Naive thymus-derived CD4-positive, alpha-beta T cell (primary cell): ENCODE measurements at regions of chr20 and their contacts with region 1.

Region 1: GRCh38 chr20:3767427-3768341 is at the start of gene ADISSP:
- DNase-seq: peak; percentile 92 to 98 (median 94)
- ATAC-seq: peak; percentile 93
- H3K4me3 ChIP-seq: peak within 1 kb of the TSS; percentile 96
- H3K4me3 Mint-ChIP-seq: peak within 1 kb of the TSS; percentile 78 to 94 (median 90)
- H3K27ac ChIP-seq: peak within 1 kb of the TSS; percentile 100
- H3K27ac Mint-ChIP-seq: peak within 1 kb of the TSS; percentile 89 to 98 (median 94)
- H3K4me1 ChIP-seq: peaks cover 6 to 13% of the 10 kb centered on the region in 2 donors
- H3K4me1 Mint-ChIP-seq: peaks cover 11 to 29% (median 21%) of the 10 kb centered on the region in 7 donors
- H3K27me3 ChIP-seq: no peaks in the 10 kb centered on the region
- H3K27me3 Mint-ChIP-seq: peaks cover 0 to 6% (median 0%) of the 10 kb centered on the region in 5 donors
- total RNA-seq, gene ADISSP: 14.0 to 27.4 (median 18.4) TPM

Region 2: DNA sequence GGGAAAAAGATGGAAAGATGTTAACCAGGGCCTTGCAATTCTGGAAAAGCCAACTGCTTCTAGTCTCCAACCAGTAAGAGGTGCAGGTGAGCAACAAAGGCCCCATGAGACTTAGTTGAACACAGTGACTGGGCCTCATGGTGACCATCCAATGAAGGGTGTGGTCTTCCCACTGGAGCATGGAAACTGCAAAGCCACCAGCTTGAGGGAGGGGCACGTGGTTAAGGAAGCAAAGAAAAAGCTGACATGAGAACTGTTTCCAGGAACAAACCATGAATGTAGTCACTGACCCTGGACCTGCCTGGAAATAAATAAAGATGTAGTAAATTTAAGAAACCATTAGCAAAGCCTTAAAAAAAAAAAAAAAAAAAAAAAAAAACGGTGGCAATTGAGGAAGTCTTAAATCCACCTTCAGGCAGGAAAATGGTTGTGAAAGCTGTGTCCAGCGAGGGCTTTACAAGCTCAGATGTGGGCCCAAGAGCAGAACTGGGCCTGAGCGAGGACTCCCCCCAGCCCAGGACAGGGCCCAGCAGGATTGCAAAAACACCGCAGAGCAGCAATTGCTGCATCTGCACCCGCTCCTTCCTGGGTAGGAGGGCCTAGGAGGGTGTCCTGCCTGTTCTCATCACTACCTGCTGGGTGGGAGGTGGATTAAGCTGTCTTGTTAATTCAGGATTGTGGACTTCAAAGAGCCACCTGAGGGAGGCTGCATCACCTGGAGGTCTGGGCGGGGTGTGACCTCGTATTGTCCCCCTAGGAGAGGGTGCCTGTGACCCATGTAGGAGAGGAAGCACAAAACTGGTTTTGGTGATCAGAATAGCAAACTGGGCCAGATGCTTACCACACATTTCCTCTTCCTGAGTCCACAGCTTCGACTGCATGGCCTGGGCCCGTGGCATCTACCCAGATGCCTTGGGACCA is 114.7 kb before region 1 on chr20:
- CTCF ChIA-PET with region 1: no interaction called
- POLR2A ChIA-PET with region 1: no interaction called
- intact Hi-C with region 1: no loop called
- DNase-seq: no peak
- ATAC-seq: no peak
- H3K4me3 ChIP-seq: no peak overlapping the region
- H3K4me3 Mint-ChIP-seq: no peak overlapping the region
- H3K27ac ChIP-seq: no peak overlapping the region
- H3K27ac Mint-ChIP-seq: peak overlapping the region in 2 of 9 donors; percentile 17 to 21
- H3K4me1 ChIP-seq: no peaks in the 10 kb centered on the region
- H3K4me1 Mint-ChIP-seq: peaks cover 0 to 10% (median 0%) of the 10 kb centered on the region in 7 donors
- H3K27me3 ChIP-seq: no peaks in the 10 kb centered on the region
- H3K27me3 Mint-ChIP-seq: peaks cover 0 to 8% (median 0%) of the 10 kb centered on the region in 5 donors

Region 3: GRCh38 chr20:3679749-3680700 is 87.7 kb before region 1 on chr20:
- CTCF ChIA-PET with region 1: interaction called, 4 read pairs
- POLR2A ChIA-PET with region 1: no interaction called
- intact Hi-C with region 1: loop called in 1 of 2 experiments (anchors 2 kb)
- DNase-seq: no peak
- ATAC-seq: no peak
- H3K4me3 ChIP-seq: no peak overlapping the region
- H3K4me3 Mint-ChIP-seq: no peak overlapping the region
- H3K27ac ChIP-seq: no peak overlapping the region
- H3K27ac Mint-ChIP-seq: no peak overlapping the region
- H3K4me1 ChIP-seq: no peaks in the 10 kb centered on the region
- H3K4me1 Mint-ChIP-seq: peaks cover 0 to 9% (median 4%) of the 10 kb centered on the region in 7 donors
- H3K27me3 ChIP-seq: no peaks in the 10 kb centered on the region
- H3K27me3 Mint-ChIP-seq: peaks cover 47 to 71% (median 60%) of the 10 kb centered on the region in 5 donors

Region 4: DNA sequence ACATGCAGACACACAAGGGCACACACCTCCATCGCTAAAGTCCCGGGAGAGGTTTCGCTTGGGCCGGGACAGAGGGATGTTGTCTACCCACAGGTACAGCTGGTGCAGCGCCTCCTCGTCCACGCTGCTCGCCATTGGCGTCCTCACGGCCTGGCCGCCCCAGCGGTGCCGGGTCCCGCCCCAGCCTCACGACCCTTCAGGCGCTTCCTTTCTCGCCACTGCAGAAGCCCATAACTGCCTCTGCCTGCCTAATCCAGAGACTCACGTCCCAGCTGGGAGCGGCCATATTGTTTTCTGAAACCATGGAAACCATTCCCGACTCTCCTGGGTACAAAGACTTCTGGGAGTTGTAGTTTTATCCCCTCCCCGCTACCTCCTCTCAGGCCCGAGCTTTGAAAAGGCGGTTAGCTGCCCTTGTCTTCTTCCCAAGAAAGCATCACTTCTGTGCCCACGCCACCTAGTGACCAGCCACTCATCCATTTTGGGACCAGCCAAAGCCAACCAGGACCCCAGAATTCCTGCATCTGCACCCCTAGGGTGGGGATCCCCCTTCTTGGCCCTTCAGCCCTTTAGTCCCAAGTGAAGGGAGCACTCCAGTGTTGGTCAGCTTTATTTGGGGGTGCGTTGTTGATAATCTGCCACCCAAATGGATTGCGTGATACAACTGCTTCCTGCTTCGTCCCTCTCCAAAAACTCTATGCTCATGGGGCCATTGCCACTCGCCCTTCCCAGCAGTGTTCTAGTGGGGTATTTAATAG is 13.6 kb after region 1 on chr20 and contains the start of gene SPEF1:
- CTCF ChIA-PET with region 1: interaction called, 7 read pairs
- POLR2A ChIA-PET with region 1: interaction called, 21 read pairs
- intact Hi-C with region 1: loop called (anchors 1 kb)
- DNase-seq: peak in 5 of 9 donors; percentile 38 to 56 (median 50)
- ATAC-seq: peak; percentile 67
- H3K4me3 ChIP-seq: peak within 1 kb of the TSS; percentile 24
- H3K4me3 Mint-ChIP-seq: peak within 1 kb of the TSS; percentile 1 to 81 (median 61)
- H3K27ac ChIP-seq: peak within 1 kb of the TSS; percentile 28
- H3K27ac Mint-ChIP-seq: peak within 1 kb of the TSS in 7 of 9 donors; percentile 25 to 78 (median 67)
- H3K4me1 ChIP-seq: peaks cover 4 to 10% of the 10 kb centered on the region in 2 donors
- H3K4me1 Mint-ChIP-seq: peaks cover 22 to 51% (median 44%) of the 10 kb centered on the region in 7 donors
- H3K27me3 ChIP-seq: no peaks in the 10 kb centered on the region
- H3K27me3 Mint-ChIP-seq: peaks cover 0 to 29% (median 0%) of the 10 kb centered on the region in 5 donors
- total RNA-seq, gene SPEF1: 0.24 to 0.32 (median 0.29) TPM in 3 of 5 experiments, not detected in the others

Region 5: DNA sequence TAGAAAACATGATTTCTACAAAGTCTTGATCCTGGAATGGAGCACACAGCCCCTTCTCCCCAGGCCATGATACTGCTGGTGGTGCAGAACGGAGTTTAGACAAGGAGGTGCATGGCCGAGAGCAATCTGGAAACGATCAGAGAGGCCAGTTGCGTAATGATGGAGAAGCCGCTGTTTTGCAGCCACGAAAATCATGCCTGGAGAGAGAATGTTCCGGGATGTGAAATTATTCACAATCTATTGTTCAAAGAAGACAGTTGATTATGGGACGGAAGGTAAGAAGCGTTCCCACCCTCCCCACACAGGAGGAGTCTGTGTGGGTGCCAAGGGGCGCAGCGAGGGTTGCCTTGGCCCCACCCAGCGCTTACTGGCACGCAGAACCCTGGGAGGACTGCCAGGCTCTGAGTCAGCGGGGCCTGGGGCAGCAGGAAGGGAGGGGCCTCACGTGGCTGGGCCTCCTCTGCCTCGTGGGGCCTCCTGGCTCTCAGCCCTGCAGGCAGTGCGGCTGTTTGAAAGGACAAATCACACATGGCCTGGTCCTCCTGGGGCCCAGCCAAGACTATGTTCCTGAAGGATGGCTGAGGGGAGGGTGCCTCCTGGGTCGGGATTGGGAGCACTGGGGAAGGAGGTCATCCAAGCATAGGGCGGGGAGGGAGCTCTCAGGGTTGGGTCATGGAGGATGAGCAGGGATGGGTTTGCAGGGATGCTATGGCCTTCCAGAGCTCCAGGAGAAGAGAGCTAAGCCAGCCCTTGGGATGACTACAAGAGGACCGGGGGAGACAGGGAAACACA is 44.0 kb after region 1 on chr20:
- CTCF ChIA-PET with region 1: interaction called, 3 read pairs
- POLR2A ChIA-PET with region 1: interaction called, 15 read pairs
- intact Hi-C with region 1: loop called in 1 of 2 experiments (anchors 1 kb)
- DNase-seq: peak; percentile 79 to 96 (median 91)
- ATAC-seq: peak; percentile 97
- H3K4me3 ChIP-seq: peak overlapping the region; percentile 62
- H3K4me3 Mint-ChIP-seq: peak overlapping the region; percentile 77 to 96 (median 90)
- H3K27ac ChIP-seq: peak overlapping the region; percentile 84
- H3K27ac Mint-ChIP-seq: peak overlapping the region; percentile 94 to 100 (median 98)
- H3K4me1 ChIP-seq: peaks cover 70% of the 10 kb centered on the region in 2 donors
- H3K4me1 Mint-ChIP-seq: peaks cover 56 to 80% (median 71%) of the 10 kb centered on the region in 7 donors
- H3K27me3 ChIP-seq: no peaks in the 10 kb centered on the region
- H3K27me3 Mint-ChIP-seq: no peaks in the 10 kb centered on the region

Region 6: DNA sequence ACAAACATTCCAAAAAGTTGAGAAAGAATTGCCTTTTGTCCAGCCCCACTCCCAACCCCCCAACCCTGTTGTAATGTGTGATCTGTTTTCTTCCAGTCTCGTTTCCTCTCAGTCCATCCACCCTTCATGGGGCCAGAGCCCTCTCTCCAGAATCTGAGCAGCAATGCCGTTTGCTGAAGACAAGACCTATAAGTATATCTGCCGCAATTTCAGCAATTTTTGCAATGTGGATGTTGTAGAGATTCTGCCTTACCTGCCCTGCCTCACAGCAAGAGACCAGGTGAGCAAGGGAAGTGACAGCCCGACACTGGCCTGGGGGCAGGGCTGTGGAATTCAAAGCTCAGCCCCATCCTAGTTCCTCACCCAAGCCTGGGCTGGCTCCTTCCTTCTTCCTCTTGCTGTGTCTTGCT is 86.8 kb after region 1 on chr20:
- CTCF ChIA-PET with region 1: interaction called, 5 read pairs
- POLR2A ChIA-PET with region 1: interaction called, 6 read pairs
- intact Hi-C with region 1: loop called (anchors 1 to 5 kb)
- DNase-seq: no peak
- ATAC-seq: peak; percentile 48
- H3K4me3 ChIP-seq: no peak overlapping the region
- H3K4me3 Mint-ChIP-seq: no peak overlapping the region
- H3K27ac ChIP-seq: no peak overlapping the region
- H3K27ac Mint-ChIP-seq: peak overlapping the region in 3 of 9 donors; percentile 33 to 41 (median 33)
- H3K4me1 ChIP-seq: peaks cover 0 to 3% of the 10 kb centered on the region in 2 donors
- H3K4me1 Mint-ChIP-seq: peaks cover 12 to 22% (median 16%) of the 10 kb centered on the region in 7 donors
- H3K27me3 ChIP-seq: no peaks in the 10 kb centered on the region
- H3K27me3 Mint-ChIP-seq: no peaks in the 10 kb centered on the region

Region 7: GRCh38 chr20:4091490-4092479 is 324.1 kb after region 1 on chr20:
- CTCF ChIA-PET with region 1: no interaction called
- POLR2A ChIA-PET with region 1: no interaction called
- intact Hi-C with region 1: loop called in 1 of 2 experiments (anchors 5 kb)
- DNase-seq: peak in 6 of 9 donors; percentile 6 to 62 (median 18)
- ATAC-seq: peak; percentile 51
- H3K4me3 ChIP-seq: no peak overlapping the region
- H3K4me3 Mint-ChIP-seq: no peak overlapping the region
- H3K27ac ChIP-seq: no peak overlapping the region
- H3K27ac Mint-ChIP-seq: peak overlapping the region in 1 of 9 donors; percentile 37
- H3K4me1 ChIP-seq: no peaks in the 10 kb centered on the region
- H3K4me1 Mint-ChIP-seq: peaks cover 0 to 5% (median 0%) of the 10 kb centered on the region in 7 donors
- H3K27me3 ChIP-seq: no peaks in the 10 kb centered on the region
- H3K27me3 Mint-ChIP-seq: peaks cover 9 to 23% (median 11%) of the 10 kb centered on the region in 5 donors